CD8-positive, alpha-beta T cell (primary cell): ENCODE measurements at regions of chr2 and their contacts with region 1.

Region 1: DNA sequence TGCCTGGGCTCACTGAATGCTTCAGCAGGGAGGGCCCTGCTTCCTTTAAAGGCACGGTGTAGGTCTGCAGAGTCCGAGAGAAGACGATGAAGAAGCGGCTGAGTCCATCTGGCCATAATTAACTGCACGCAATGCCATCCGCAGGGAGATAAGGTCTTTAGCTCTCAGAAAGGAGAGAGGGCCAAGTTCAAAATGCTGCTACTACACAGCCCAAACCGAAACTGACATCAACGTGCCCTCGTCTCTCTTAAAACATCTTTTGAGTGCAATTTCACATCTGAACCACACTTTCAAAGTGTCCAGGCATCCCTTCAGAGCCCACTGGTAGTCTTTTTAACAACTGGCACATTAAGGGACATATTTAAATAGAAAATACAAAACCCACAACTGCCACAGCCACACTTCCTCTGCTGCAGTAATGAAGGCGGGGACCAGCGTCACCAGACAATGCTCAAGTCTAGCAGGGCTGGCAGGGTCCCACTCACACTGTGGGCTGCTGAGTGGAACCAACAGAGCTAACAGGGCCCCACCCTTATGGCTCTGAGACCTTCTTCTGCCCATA is 35.8 kb downstream of the ST3GAL5 start:
- DNase-seq: peak; percentile 59 to 93 (median 81)
- ATAC-seq: peak; percentile 89
- H3K4me3 ChIP-seq: peak overlapping the region; percentile 48 to 49
- H3K4me3 Mint-ChIP-seq: peak overlapping the region; percentile 85
- H3K27ac ChIP-seq: peak overlapping the region; percentile 87 to 97
- H3K27ac Mint-ChIP-seq: peak overlapping the region; percentile 99
- H3K4me1 ChIP-seq: peaks cover 63% of the 10 kb centered on the region
- H3K4me1 Mint-ChIP-seq: peaks cover 73% of the 10 kb centered on the region
- H3K27me3 ChIP-seq: no peaks in the 10 kb centered on the region
- H3K27me3 Mint-ChIP-seq: no peaks in the 10 kb centered on the region
- CTCF ChIP-seq: no peak

Region 2: GRCh38 chr2:85777441-85777861 is 75.6 kb before region 1 on chr2:
- CTCF ChIA-PET with region 1: no interaction called
- POLR2A ChIA-PET with region 1: no interaction called
- intact Hi-C with region 1: loop called in 1 of 2 experiments (anchors 2 kb)
- DNase-seq: no peak
- ATAC-seq: no peak
- H3K4me3 ChIP-seq: no peak overlapping the region
- H3K4me3 Mint-ChIP-seq: no peak overlapping the region
- H3K27ac ChIP-seq: no peak overlapping the region
- H3K27ac Mint-ChIP-seq: no peak overlapping the region
- H3K4me1 ChIP-seq: no peaks in the 10 kb centered on the region
- H3K4me1 Mint-ChIP-seq: no peaks in the 10 kb centered on the region
- H3K27me3 ChIP-seq: peaks cover 0 to under 1% of the 10 kb centered on the region in 2 experiments
- H3K27me3 Mint-ChIP-seq: peaks cover 10% of the 10 kb centered on the region
- CTCF ChIP-seq: no peak

Region 3: GRCh38 chr2:86195055-86195807 is 342.2 kb after region 1 on chr2 and contains the start of gene IMMT:
- CTCF ChIA-PET with region 1: no interaction called
- POLR2A ChIA-PET with region 1: no interaction called
- intact Hi-C with region 1: loop called in 1 of 2 experiments (anchors 10 kb)
- DNase-seq: peak; percentile 79 to 97 (median 93)
- ATAC-seq: peak; percentile 90
- H3K4me3 ChIP-seq: peak within 1 kb of the TSS; percentile 96 to 98
- H3K4me3 Mint-ChIP-seq: peak within 1 kb of the TSS; percentile 89
- H3K27ac ChIP-seq: peak within 1 kb of the TSS; percentile 91 to 98
- H3K27ac Mint-ChIP-seq: peak within 1 kb of the TSS; percentile 90
- H3K4me1 ChIP-seq: peaks cover 37% of the 10 kb centered on the region
- H3K4me1 Mint-ChIP-seq: peaks cover 63% of the 10 kb centered on the region
- H3K27me3 ChIP-seq: no peaks in the 10 kb centered on the region
- H3K27me3 Mint-ChIP-seq: no peaks in the 10 kb centered on the region
- CTCF ChIP-seq: no peak
- total RNA-seq, gene IMMT: 34.3 to 35.8 TPM